Activated CD8-positive, alpha-beta T cell treated with anti-CD3 and anti-CD28 coated beads, Interleukin-2, amount 10 ng/mL, durations not matched to agents 7 days and 5 days (primary cell): ENCODE measurements at regions of chr15 and their contacts with region 1.

Region 1: GRCh38 chr15:92903941-92904831 is 4.1 kb downstream of the CHD2 start:
- DNase-seq: peak; percentile 99
- ATAC-seq: peak; percentile 87
- H3K4me3 Mint-ChIP-seq: peak overlapping the region; percentile 83
- H3K27ac Mint-ChIP-seq: peak overlapping the region; percentile 98
- H3K4me1 Mint-ChIP-seq: peaks cover 57% of the 10 kb centered on the region
- H3K27me3 Mint-ChIP-seq: no peaks in the 10 kb centered on the region

Region 2: GRCh38 chr15:92820236-92821021 is 83.8 kb before region 1 on chr15:
- CTCF ChIA-PET with region 1: interaction called, 8 read pairs
- POLR2A ChIA-PET with region 1: interaction called, 34 read pairs
- DNase-seq: peak; percentile 89
- ATAC-seq: peak; percentile 85
- H3K4me3 Mint-ChIP-seq: peak overlapping the region; percentile 75
- H3K27ac Mint-ChIP-seq: peak overlapping the region; percentile 79
- H3K4me1 Mint-ChIP-seq: peaks cover 58% of the 10 kb centered on the region
- H3K27me3 Mint-ChIP-seq: no peaks in the 10 kb centered on the region

Region 3: GRCh38 chr15:92831655-92832328 is 72.4 kb before region 1 on chr15:
- CTCF ChIA-PET with region 1: interaction called, 8 read pairs
- POLR2A ChIA-PET with region 1: interaction called, 49 read pairs
- DNase-seq: peak; percentile 94
- ATAC-seq: peak; percentile 99
- H3K4me3 Mint-ChIP-seq: peak overlapping the region; percentile 73
- H3K27ac Mint-ChIP-seq: peak overlapping the region; percentile 95
- H3K4me1 Mint-ChIP-seq: peaks cover 56% of the 10 kb centered on the region
- H3K27me3 Mint-ChIP-seq: no peaks in the 10 kb centered on the region

Region 4: GRCh38 chr15:92889390-92890107 is 14.6 kb before region 1 on chr15:
- CTCF ChIA-PET with region 1: interaction called, 80 read pairs
- POLR2A ChIA-PET with region 1: interaction called, 594 read pairs
- DNase-seq: no peak
- ATAC-seq: peak; percentile 18
- H3K4me3 Mint-ChIP-seq: peak overlapping the region; percentile 63
- H3K27ac Mint-ChIP-seq: peak overlapping the region; percentile 51
- H3K4me1 Mint-ChIP-seq: peaks cover 67% of the 10 kb centered on the region
- H3K27me3 Mint-ChIP-seq: no peaks in the 10 kb centered on the region

Region 5: GRCh38 chr15:92917606-92918407 is 13.6 kb after region 1 on chr15:
- CTCF ChIA-PET with region 1: interaction called, 46 read pairs
- POLR2A ChIA-PET with region 1: interaction called, 123 read pairs
- DNase-seq: peak; percentile 97
- ATAC-seq: peak; percentile 36
- H3K4me3 Mint-ChIP-seq: peak overlapping the region; percentile 12
- H3K27ac Mint-ChIP-seq: peak overlapping the region; percentile 79
- H3K4me1 Mint-ChIP-seq: peaks cover 84% of the 10 kb centered on the region
- H3K27me3 Mint-ChIP-seq: no peaks in the 10 kb centered on the region